HEK293T (cell line): ENCODE measurements at regions of chr14 and their contacts with region 1.

Region 1: DNA sequence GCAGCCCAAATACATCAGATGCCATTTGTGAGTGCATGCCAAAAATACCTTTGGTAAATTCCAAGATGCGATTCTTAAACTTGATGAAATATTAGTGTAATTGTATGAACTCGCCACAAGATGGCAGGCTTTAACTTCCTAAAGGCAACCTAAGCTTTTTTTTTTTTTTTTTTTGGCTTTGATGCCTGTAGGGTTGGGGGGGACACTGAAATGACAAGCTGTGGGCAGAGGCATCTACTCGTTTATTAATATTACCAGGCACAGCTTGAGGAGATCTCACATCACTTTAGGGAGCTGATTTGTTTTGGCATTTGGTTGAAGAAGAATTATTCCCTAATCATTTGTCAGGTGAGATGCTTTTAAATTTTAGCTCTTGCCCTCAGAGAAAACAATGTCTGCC is 126.7 kb upstream of the CCDC196 start:
- DNase-seq: peak; percentile 49

Region 2: GRCh38 chr14:65927931-65928356 is 431.6 kb before region 1 on chr14:
- CTCF ChIA-PET with region 1: interaction called, 13 read pairs
- POLR2A ChIA-PET with region 1: no interaction called
- DNase-seq: no peak

Region 3: DNA sequence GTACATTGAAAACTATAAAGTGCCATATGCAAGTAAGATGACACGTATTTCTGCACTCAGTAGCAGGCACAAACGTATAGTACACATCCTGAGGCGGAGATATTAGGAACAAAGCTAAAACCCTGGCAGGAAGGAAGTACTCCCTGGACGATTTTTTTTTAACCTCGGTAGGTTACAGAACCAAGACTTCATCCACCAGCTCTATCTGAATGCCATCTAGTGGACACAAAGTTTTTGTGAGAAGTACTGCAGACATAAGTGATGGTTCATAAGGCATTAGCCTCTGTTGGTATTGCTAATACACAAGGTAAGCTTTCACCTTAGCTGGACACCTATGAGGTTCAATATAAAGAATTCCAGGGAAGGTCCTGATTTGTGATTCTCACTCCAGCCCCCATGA is 43.7 kb after region 1 on chr14:
- CTCF ChIA-PET with region 1: interaction called, 13 read pairs
- POLR2A ChIA-PET with region 1: no interaction called
- DNase-seq: peak; percentile 34